ENCODE measurements at regions of chr3 and their contacts with region 1.

Region 1: DNA sequence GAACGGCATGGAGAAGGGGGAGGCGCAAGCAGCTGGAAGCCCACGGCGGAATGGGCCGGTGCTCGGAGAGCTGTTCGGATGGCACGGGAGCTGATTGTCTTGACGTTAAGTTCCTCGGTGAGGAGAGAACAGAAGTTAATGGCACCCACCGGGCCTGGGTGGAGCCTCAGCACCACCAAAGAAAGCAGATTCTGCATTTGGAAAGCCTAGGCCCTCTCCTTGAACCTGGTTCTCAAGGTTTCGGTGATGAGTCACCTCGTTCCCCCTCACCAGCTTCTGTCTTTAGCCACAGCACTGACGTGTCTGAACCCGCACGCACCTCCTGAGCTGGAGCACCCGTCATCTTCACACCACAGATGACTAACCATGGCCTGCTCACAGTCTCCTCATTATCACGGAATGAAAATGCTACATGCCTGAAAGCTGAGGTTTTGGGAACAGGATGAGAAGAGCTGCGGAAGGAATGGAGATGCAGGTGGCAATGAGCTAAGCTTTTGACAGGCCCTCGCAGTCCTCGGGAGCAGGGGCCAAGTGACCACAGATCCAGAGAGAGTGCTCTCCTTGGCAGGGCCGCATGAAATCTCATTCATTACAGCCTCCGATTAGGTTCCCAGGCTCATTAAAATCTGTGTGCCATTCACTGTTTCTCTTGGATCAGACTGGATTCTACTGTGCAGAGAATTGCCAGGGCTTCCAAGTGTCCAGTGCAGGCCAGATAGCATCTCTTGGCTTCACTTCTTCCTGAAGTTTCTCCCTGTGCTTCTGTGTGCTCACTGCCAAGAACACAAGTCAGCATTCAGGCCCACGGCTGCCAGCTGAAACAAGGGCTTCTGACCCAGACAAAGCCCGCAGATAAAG is 96.3 kb upstream of the DLG1 start:
- DNase-seq: peak; percentile 100
- H3K4me3 ChIP-seq: no peak overlapping the region
- H3K27ac ChIP-seq: peak overlapping the region; percentile 88
- H3K4me1 ChIP-seq: peaks cover 27% of the 10 kb centered on the region
- H3K27me3 ChIP-seq: no peaks in the 10 kb centered on the region
- CTCF ChIP-seq: no peak

Region 2: GRCh38 chr3:197354319-197355001 is 40.2 kb before region 1 on chr3:
- CTCF ChIA-PET with region 1: no interaction called
- dilution Hi-C with region 1: loop called (anchors 5 kb)
- in situ Hi-C with region 1: no loop called
- intact Hi-C with region 1: no loop called
- DNase-seq: no peak
- H3K4me3 ChIP-seq: no peak overlapping the region
- H3K27ac ChIP-seq: no peak overlapping the region
- H3K4me1 ChIP-seq: no peaks in the 10 kb centered on the region
- H3K27me3 ChIP-seq: no peaks in the 10 kb centered on the region
- CTCF ChIP-seq: no peak

Region 3: GRCh38 chr3:197372047-197372666 is 22.5 kb before region 1 on chr3:
- CTCF ChIA-PET with region 1: interaction called, 4 read pairs
- dilution Hi-C with region 1: no loop called
- in situ Hi-C with region 1: no loop called
- intact Hi-C with region 1: loop called (anchors 1 kb)
- DNase-seq: peak; percentile 93
- H3K4me3 ChIP-seq: no peak overlapping the region
- H3K27ac ChIP-seq: peak overlapping the region; percentile 63
- H3K4me1 ChIP-seq: peaks cover 56% of the 10 kb centered on the region
- H3K27me3 ChIP-seq: no peaks in the 10 kb centered on the region
- CTCF ChIP-seq: no peak

Region 4: GRCh38 chr3:197430934-197431333 is 36.2 kb after region 1 on chr3:
- CTCF ChIA-PET with region 1: no interaction called
- dilution Hi-C with region 1: loop called (anchors 5 kb)
- in situ Hi-C with region 1: no loop called
- intact Hi-C with region 1: no loop called
- DNase-seq: no peak
- H3K4me3 ChIP-seq: no peak overlapping the region
- H3K27ac ChIP-seq: no peak overlapping the region
- H3K4me1 ChIP-seq: no peaks in the 10 kb centered on the region
- H3K27me3 ChIP-seq: no peaks in the 10 kb centered on the region
- CTCF ChIP-seq: no peak

Region 5: GRCh38 chr3:197478746-197479668 is 84.3 kb after region 1 on chr3:
- CTCF ChIA-PET with region 1: no interaction called
- dilution Hi-C with region 1: loop called (anchors 5 kb)
- in situ Hi-C with region 1: no loop called
- intact Hi-C with region 1: no loop called
- DNase-seq: peak; percentile 81
- H3K4me3 ChIP-seq: no peak overlapping the region
- H3K27ac ChIP-seq: peak overlapping the region; percentile 72
- H3K4me1 ChIP-seq: peaks cover 32% of the 10 kb centered on the region
- H3K27me3 ChIP-seq: no peaks in the 10 kb centered on the region
- CTCF ChIP-seq: no peak